Left ventricle myocardium inferior (tissue), 1 donor: ENCODE measurements at regions of chr1 and their contacts with region 1.

Region 1: GRCh38 chr1:99533909-99534637 is 111.8 kb upstream of the PALMD start:
- DNase-seq: no peak
- H3K4me3 ChIP-seq: peak overlapping the region; percentile 34
- H3K27ac ChIP-seq: peak overlapping the region; percentile 79
- H3K4me1 ChIP-seq: peaks cover 50% of the 10 kb centered on the region
- H3K27me3 ChIP-seq: no peaks in the 10 kb centered on the region
- CTCF ChIP-seq: no peak

Region 2: GRCh38 chr1:99645699-99646531 is 111.8 kb after region 1 on chr1 and contains the start of gene PALMD:
- intact Hi-C with region 1: loop called (anchors 10 kb)
- DNase-seq: peak; percentile 50
- H3K4me3 ChIP-seq: peak within 1 kb of the TSS; percentile 71
- H3K27ac ChIP-seq: peak within 1 kb of the TSS; percentile 95
- H3K4me1 ChIP-seq: peaks cover 44% of the 10 kb centered on the region
- H3K27me3 ChIP-seq: no peaks in the 10 kb centered on the region
- CTCF ChIP-seq: no peak
- total RNA-seq, gene PALMD: 123 TPM